Head of caudate nucleus (tissue), 42 donors: ENCODE measurements at regions of chr5 and their contacts with region 1.

Region 1: GRCh38 chr5:11268891-11269290 is 507.9 kb upstream of the DAP start:
- DNase-seq: no peak

Region 2: DNA sequence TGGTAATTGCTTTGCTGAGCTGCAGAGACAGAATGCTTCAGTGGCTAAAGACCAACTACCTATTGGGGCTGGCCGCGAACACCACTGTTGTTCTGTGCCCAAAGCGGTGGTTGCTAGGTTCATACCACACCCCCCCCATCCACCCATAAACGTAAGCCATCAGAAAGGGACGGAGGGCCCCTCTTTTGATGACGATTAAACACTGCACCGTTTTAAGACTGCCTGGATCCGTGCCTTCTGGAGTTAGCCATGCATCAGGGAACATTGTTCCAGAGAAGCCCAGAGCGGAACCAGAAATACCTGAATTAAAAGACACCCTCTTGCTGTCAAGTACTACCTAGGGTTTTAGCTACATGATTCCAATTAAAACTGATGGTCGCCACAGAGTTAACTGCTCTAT is 138.8 kb before region 1 on chr5:
- intact Hi-C with region 1: no loop called
- DNase-seq: peak in 1 of 42 donors; percentile 13

Region 3: DNA sequence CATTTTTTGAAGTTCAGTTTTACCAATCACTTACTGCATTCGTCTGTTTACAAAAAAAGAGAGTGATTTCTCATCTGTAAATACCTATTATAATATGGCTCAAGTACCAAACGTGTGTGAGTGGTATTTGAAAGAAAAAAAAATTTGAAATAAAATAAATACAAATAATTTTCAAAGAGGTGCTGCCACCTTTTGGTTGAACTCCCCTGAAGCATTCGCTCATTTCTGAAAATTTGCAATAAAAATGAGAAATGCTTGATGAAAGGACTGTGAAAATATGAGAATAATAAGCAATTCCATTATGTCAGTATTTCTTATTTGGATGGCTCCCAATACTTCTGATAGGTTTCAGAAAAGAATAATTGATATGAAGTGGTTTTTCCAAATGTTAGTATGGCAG is 225.4 kb after region 1 on chr5:
- intact Hi-C with region 1: loop called (anchors 5 kb)
- DNase-seq: peak in 1 of 42 donors; percentile 26

Region 4: GRCh38 chr5:11609570-11610322 is 340.9 kb after region 1 on chr5:
- intact Hi-C with region 1: loop called (anchors 5 kb)
- DNase-seq: no peak